GM12878 (cell line): ENCODE measurements at regions of chr15 and their contacts with region 1.

Region 1: GRCh38 chr15:74540761-74541493 is at the start of gene ARID3B:
- DNase-seq: peak; percentile 93
- ATAC-seq: peak; percentile 88
- H3K4me3 ChIP-seq: peak within 1 kb of the TSS; percentile 99
- H3K27ac ChIP-seq: peak within 1 kb of the TSS; percentile 95
- H3K4me1 ChIP-seq: peaks cover 9% of the 10 kb centered on the region
- H3K27me3 ChIP-seq: no peaks in the 10 kb centered on the region
- CTCF ChIP-seq: no peak
- EP300 ChIP-seq: no peak
- POLR2A ChIP-seq: peak; percentile 91
- RAD21 ChIP-seq: no peak
- polyA plus RNA-seq, gene ARID3B: 1.1 to 1.8 TPM

Region 2: GRCh38 chr15:74460871-74461846 is 79.8 kb before region 1 on chr15 and contains the start of gene UBL7:
- CTCF ChIA-PET with region 1: interaction called, 3 read pairs
- POLR2A ChIA-PET with region 1: interaction called, 8 read pairs
- RAD21 ChIA-PET with region 1: interaction called, 7 read pairs
- SMC1A ChIA-PET with region 1: interaction called, 5 read pairs
- in situ Hi-C with region 1: no loop called
- intact Hi-C with region 1: loop called (anchors 1 kb)
- DNase-seq: peak; percentile 77
- ATAC-seq: peak; percentile 92
- H3K4me3 ChIP-seq: peak within 1 kb of the TSS; percentile 92
- H3K27ac ChIP-seq: peak within 1 kb of the TSS; percentile 93
- H3K4me1 ChIP-seq: peaks cover 11% of the 10 kb centered on the region
- H3K27me3 ChIP-seq: no peaks in the 10 kb centered on the region
- CTCF ChIP-seq: peak in 2 of 3 experiments; percentile 7 to 48; a peak in 3 of 6 replicates
- EP300 ChIP-seq: no peak
- POLR2A ChIP-seq: peak; percentile 98
- RAD21 ChIP-seq: no peak
- polyA plus RNA-seq, gene UBL7: 25.9 to 59.1 TPM

Region 3: GRCh38 chr15:74511583-74511982 is 29.3 kb before region 1 on chr15:
- CTCF ChIA-PET with region 1: no interaction called
- POLR2A ChIA-PET with region 1: interaction called, 5 read pairs
- RAD21 ChIA-PET with region 1: interaction called, 3 read pairs
- SMC1A ChIA-PET with region 1: interaction called, 4 read pairs
- in situ Hi-C with region 1: no loop called
- intact Hi-C with region 1: loop called (anchors 2 kb)
- DNase-seq: no peak
- ATAC-seq: peak; percentile 80
- H3K4me3 ChIP-seq: no peak overlapping the region
- H3K27ac ChIP-seq: peak overlapping the region; percentile 75
- H3K4me1 ChIP-seq: peaks cover 14% of the 10 kb centered on the region
- H3K27me3 ChIP-seq: no peaks in the 10 kb centered on the region
- CTCF ChIP-seq: no peak
- EP300 ChIP-seq: no peak
- POLR2A ChIP-seq: no peak
- RAD21 ChIP-seq: no peak

Region 4: GRCh38 chr15:74552773-74553441 is 12.0 kb after region 1 on chr15:
- CTCF ChIA-PET with region 1: interaction called, 10 read pairs
- POLR2A ChIA-PET with region 1: interaction called, 4 read pairs
- RAD21 ChIA-PET with region 1: interaction called, 8 read pairs
- SMC1A ChIA-PET with region 1: interaction called, 10 read pairs
- in situ Hi-C with region 1: no loop called
- intact Hi-C with region 1: no loop called
- DNase-seq: no peak
- ATAC-seq: peak; percentile 60
- H3K4me3 ChIP-seq: peak overlapping the region; percentile 13; the same call in 1 of the 2 replicates
- H3K27ac ChIP-seq: peak overlapping the region; percentile 24
- H3K4me1 ChIP-seq: peaks cover 17% of the 10 kb centered on the region; the same call in 1 of the 2 replicates
- H3K27me3 ChIP-seq: no peaks in the 10 kb centered on the region
- CTCF ChIP-seq: no peak
- EP300 ChIP-seq: no peak
- POLR2A ChIP-seq: no peak
- RAD21 ChIP-seq: no peak

Region 5: DNA sequence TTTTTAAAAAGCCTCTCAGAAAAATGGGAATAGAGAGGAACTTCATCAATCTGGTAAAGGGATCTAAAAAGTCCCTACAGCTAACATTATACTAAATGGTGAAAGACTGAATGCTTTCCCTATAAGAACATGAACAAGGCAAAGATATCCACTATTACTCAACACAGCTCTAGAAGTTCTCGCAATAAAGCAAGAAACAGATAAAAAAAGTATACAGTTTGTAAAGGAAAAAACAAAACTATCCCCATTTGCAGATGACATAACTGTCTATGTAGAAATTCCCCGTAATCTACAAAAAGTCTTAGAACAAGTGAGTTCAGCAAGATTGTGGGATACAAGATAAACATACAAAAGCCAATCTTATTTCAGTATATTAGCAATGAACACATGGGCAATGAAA is 139.5 kb after region 1 on chr15:
- CTCF ChIA-PET with region 1: no interaction called
- POLR2A ChIA-PET with region 1: no interaction called
- RAD21 ChIA-PET with region 1: no interaction called
- SMC1A ChIA-PET with region 1: no interaction called
- in situ Hi-C with region 1: no loop called
- intact Hi-C with region 1: no loop called
- DNase-seq: no peak
- ATAC-seq: no peak
- H3K4me3 ChIP-seq: no peak overlapping the region
- H3K27ac ChIP-seq: no peak overlapping the region
- H3K4me1 ChIP-seq: no peaks in the 10 kb centered on the region
- H3K27me3 ChIP-seq: no peaks in the 10 kb centered on the region
- CTCF ChIP-seq: no peak
- EP300 ChIP-seq: no peak
- POLR2A ChIP-seq: no peak
- RAD21 ChIP-seq: no peak

Region 6: GRCh38 chr15:74787251-74788041 is 246.5 kb after region 1 on chr15:
- CTCF ChIA-PET with region 1: no interaction called
- POLR2A ChIA-PET with region 1: interaction called, 3 read pairs
- RAD21 ChIA-PET with region 1: interaction called, 3 read pairs
- SMC1A ChIA-PET with region 1: interaction called, 3 read pairs
- in situ Hi-C with region 1: no loop called
- intact Hi-C with region 1: loop called (anchors 5 kb)
- DNase-seq: peak; percentile 97
- ATAC-seq: peak; percentile 58
- H3K4me3 ChIP-seq: peak overlapping the region; percentile 94
- H3K27ac ChIP-seq: peak overlapping the region; percentile 96
- H3K4me1 ChIP-seq: peaks cover 55% of the 10 kb centered on the region
- H3K27me3 ChIP-seq: no peaks in the 10 kb centered on the region
- CTCF ChIP-seq: peak; percentile 79 to 93 (median 82)
- EP300 ChIP-seq: peak; percentile 83 to 88
- POLR2A ChIP-seq: peak; percentile 76
- RAD21 ChIP-seq: peak; percentile 45; the same call in 1 of the 2 replicates